HAP-1 (cell line): ENCODE measurements at regions of chr22 and their contacts with region 1.

Region 1: DNA sequence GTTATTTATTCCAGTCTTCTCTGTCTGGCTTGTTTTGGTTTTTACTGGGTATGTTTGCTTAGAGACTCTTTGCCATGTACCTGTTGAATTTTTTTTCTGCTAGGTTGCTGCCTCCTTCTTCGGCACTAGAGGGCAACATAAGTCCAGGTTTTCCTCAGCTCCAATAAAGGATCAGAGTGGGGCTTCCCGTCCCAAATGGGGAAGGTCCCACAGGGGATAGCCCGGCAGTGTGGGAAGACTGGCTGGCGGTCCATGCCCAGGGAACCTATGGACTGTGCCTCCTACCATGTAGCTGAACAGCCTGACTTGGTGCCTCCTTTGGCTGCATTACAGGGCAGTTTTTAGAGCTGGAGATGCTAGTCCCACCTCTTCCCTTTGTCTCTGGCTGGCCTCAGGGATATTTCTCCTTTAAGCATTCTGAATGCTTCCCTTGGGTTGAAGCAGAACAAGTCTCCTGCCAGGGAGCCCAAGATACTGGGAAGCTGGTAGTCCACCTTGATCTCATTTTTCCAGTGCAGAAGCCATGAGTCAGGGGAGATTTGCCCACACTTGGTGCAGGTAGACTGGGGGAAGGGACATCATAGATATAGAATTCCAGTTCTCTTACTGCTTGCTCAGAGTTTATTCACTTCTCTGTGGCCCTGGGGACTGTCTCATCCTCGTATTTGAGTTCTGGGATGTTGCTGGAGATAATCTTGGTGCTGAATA is 60.2 kb downstream of the BRD1 start:
- DNase-seq: peak; percentile 52 to 66
- H3K4me3 ChIP-seq: no peak overlapping the region
- H3K4me1 ChIP-seq: no peaks in the 10 kb centered on the region
- H3K27me3 ChIP-seq: no peaks in the 10 kb centered on the region

Region 2: DNA sequence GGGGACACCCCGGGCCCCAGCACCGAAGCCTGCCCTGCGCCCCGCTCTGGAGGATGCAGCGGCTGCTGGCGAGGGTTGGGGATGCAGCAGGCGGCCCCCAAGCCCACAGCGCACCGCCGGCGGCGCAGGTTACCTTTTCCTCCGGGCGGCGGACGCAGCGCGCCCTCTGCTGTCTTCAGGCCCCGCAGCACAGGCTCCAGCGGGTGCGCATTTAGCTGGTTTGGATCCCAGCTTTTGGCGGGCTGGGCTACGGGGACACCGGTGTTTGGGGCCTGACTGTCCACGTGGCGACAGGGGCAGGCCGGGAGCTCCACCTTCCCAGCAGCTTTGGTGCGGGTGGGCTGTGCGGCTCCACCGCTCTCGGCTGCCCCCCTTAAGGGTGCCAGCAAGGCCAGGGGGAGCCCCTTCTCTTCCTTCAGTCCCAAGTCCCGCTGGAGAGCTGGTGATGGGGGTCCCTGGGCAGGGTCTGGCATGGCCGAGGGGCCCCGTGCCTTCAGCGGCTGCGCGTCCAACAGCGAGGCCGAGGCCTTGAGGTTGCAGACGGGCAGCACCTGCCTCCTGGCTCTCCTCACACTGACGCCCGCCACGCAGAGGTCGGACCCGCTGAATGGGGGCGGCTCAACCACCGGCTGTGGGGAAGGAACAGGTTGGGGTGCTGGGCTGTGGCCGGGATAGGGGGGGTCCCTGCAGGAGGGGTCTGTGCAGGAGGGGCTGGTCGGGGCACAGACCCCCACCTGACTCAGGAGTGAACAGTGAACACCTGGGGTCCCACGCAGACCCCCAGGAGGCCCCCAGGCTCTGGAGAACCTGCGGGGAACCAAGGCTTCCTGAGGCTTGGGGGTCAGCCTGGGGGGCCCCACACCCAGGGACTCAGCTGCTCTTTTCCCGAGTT is 263.0 kb after region 1 on chr22:
- in situ Hi-C with region 1: loop called (anchors 10 kb)
- DNase-seq: peak; percentile 39 to 85
- H3K4me3 ChIP-seq: no peak overlapping the region
- H3K4me1 ChIP-seq: no peaks in the 10 kb centered on the region; the same call in 1 of the 2 replicates
- H3K27me3 ChIP-seq: peaks cover 9% of the 10 kb centered on the region

Region 3: GRCh38 chr22:50091092-50091768 is 323.7 kb after region 1 on chr22:
- in situ Hi-C with region 1: no loop called
- DNase-seq: no peak
- H3K4me3 ChIP-seq: no peak overlapping the region
- H3K4me1 ChIP-seq: no peaks in the 10 kb centered on the region
- H3K27me3 ChIP-seq: no peaks in the 10 kb centered on the region

Region 4: GRCh38 chr22:50209893-50210292 is 442.4 kb after region 1 on chr22:
- in situ Hi-C with region 1: loop called (anchors 5 kb)
- DNase-seq: peak; percentile 44 to 79
- H3K4me3 ChIP-seq: no peak overlapping the region
- H3K4me1 ChIP-seq: no peaks in the 10 kb centered on the region
- H3K27me3 ChIP-seq: no peaks in the 10 kb centered on the region